ENCODE measurements at regions of chr2 and their contacts with region 1.

Region 1: DNA sequence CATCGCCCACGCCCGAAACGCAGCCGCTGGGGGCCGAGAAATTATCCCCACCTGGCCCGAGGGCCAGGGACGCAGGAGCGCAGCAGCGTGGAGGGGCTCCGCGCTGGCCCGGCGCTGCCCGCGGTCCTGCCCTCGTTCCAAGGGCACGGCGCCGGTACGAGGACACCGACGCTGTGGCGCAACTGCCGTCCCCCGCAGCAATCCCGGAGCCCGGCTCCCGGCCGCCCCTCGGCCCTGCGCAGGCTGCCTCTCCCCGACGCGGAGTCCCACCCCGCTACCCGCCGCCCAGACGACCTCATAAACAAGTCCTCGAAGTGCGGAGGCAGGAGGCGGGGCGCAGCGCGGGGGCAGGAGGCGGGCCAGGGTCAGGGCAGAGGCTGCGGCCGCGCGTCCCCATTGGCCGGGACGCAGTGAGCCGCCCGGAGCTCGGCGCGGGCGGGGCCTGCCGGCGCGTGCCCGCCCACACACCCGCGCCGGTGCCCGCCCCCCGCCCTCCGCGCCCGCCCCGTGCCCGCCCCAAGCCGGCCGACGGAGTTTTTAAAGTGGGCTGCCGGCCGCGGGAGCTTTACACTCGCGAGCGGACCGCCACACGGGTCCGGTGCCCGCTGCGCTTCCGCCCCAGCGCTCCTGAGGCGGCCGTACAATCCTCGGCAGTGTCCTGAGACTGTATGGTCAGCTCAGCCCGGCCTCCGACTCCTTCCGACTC is at the start of gene EPAS1:
- DNase-seq: peak; percentile 43
- H3K4me3 ChIP-seq: peak within 1 kb of the TSS; percentile 97
- H3K27ac ChIP-seq: peak within 1 kb of the TSS; percentile 73
- H3K27me3 ChIP-seq: no peaks in the 10 kb centered on the region
- CTCF ChIP-seq: no peak
- polyA plus RNA-seq, gene EPAS1: 506 and 522 TPM in 2 replicates

Region 2: DNA sequence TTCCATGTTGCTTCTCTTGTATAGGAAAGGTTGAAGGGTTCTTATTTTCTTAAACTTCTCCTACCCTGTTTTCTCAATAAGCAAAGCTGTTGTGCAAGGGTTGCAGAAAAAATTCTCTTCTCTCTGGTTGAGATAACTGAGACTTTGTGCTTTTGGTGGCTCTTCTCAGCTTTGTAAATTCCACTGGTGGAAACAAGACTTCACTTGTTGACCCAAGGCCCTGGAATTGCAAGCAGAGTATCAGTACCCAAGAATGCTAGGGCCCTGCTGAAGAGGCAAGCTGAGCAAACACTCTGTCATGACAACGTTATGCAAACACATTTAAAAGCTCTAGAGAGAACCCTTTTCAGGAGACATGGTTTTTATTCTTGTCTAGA is 294.5 kb before region 1 on chr2:
- CTCF ChIA-PET with region 1: no interaction called
- POLR2A ChIA-PET with region 1: interaction called, 11 read pairs
- DNase-seq: no peak
- H3K4me3 ChIP-seq: no peak overlapping the region
- H3K27ac ChIP-seq: peak overlapping the region; percentile 84
- H3K27me3 ChIP-seq: no peaks in the 10 kb centered on the region
- CTCF ChIP-seq: no peak

Region 3: DNA sequence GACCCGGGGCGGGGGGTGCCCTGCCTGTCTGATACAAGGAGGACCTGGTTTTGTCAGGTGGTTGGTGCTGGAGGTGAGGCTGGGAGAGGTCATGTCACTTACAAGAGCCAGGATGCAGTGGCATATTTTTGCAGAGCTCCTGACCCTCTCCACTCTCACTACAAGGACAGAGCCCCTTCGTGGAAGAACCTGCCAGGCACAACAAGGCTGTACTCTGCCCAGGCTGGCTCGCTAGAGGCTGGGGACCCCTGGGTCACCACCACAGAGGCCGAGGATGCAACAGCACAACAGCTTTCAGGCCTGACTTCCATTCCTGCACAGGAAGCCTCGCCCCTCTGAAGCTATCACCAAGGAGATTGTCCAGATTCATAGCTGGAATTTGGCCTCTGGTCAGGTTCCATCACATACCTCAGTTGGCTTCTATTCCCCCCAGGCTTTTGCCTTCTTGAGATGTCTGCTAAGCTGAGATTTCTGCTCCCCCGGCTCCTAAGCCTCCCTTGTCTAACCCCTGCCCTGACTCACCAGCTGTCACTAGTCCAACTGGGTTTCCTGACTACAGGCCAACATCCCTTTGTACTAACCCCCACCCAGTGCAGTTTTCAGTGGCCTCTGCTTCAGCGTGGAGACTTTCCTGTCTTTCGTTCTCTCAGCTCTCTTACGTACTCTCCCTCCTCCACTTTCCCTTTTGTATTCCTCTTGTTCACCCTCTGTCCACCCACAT is 132.3 kb before region 1 on chr2:
- CTCF ChIA-PET with region 1: no interaction called
- POLR2A ChIA-PET with region 1: interaction called, 14 read pairs
- DNase-seq: peak; percentile 86
- H3K4me3 ChIP-seq: no peak overlapping the region
- H3K27ac ChIP-seq: peak overlapping the region; percentile 70
- H3K27me3 ChIP-seq: no peaks in the 10 kb centered on the region
- CTCF ChIP-seq: no peak

Region 4: DNA sequence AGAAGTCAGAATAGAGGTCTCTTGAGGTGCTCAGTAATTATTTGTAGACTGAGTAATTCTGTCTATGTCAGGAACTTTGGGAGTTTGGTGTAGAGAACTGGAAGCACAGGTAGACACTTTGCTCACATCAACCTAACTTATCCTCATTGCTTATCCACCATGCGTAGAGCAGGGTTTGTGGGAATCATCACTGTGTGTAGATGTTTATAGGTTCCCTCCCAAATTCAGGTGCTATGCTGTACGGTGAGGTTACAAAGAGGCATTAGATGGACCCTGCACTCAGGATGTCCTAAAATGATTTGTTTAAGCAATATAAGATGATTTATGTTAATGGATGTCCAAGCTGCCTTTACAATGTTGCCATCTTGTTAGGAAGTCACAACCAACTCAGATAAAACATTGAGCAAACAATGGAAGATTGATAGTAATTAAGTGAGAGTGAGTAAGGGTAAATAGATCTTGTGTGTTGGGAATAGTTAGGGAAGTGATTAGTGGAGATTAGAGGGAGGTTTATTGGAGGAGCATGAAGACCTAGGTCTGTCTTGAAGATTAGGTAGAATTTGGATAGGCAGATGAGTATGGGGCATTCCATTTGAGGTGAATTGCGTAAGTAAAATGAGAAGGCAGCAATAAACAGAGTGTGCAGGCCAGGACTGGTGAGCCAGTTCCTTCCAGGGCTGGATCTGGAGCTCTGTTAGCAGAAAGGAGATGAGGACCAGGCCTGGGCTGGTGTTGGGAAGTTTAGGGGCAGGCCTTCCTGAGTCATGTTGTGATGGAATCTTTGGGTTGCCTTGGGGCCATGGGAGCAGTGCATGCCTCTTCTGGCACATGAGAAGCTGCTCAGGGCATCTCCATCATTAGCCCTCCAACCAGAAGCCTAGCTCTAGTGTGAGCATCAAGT is 12.3 kb after region 1 on chr2:
- CTCF ChIA-PET with region 1: no interaction called
- POLR2A ChIA-PET with region 1: interaction called, 17 read pairs
- DNase-seq: no peak
- H3K4me3 ChIP-seq: no peak overlapping the region
- H3K27ac ChIP-seq: no peak overlapping the region
- H3K27me3 ChIP-seq: no peaks in the 10 kb centered on the region
- CTCF ChIP-seq: no peak

Region 5: GRCh38 chr2:46364797-46365457 is 67.9 kb after region 1 on chr2:
- CTCF ChIA-PET with region 1: interaction called, 3 read pairs
- POLR2A ChIA-PET with region 1: interaction called, 14 read pairs
- DNase-seq: peak; percentile 20
- H3K4me3 ChIP-seq: no peak overlapping the region
- H3K27ac ChIP-seq: no peak overlapping the region
- H3K27me3 ChIP-seq: no peaks in the 10 kb centered on the region
- CTCF ChIP-seq: peak; percentile 81

Region 6: DNA sequence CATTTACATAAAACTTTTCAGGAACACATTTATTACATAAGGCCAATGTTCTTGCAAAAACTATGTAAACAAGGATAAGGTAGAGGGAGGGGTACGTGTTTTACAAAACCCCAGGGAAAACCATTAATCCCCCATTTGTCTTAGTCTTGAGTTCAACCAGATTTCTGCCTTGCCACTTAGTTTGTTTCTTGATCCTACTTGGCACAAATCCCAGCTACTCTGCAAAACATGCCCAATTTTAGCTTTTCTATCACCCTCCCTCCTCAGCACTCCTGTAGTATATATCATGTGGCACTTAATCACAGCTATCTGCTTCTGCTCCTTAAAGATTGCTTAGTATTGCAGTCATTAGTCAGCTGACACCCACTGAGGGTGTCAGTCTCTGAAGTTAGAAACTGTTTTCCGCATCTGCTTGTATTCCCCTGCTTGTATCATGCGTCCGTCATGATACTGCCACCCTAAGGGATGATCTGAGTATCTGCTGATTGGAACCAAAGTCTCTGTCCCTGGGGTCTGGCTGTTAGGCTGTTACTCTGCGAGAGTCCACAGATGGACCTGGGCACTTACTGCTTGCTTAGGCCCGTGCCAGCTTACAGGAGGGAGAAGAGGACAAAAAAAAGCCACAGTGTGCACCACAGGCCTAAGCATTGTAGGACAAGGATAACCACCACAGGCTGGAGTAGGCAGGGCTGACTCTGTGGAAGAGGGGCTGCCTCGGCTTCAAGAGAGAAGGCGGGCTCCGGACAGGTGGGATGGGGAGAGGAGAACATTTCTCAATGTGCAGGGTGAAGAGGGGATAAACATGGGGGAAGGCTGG is 82.4 kb after region 1 on chr2:
- CTCF ChIA-PET with region 1: no interaction called
- POLR2A ChIA-PET with region 1: no interaction called
- DNase-seq: peak; percentile 57
- H3K4me3 ChIP-seq: no peak overlapping the region
- H3K27ac ChIP-seq: peak overlapping the region; percentile 3
- H3K27me3 ChIP-seq: no peaks in the 10 kb centered on the region
- CTCF ChIP-seq: no peak

Measured in AG04450 (cell line).